Aorta (tissue), 5 donors: ENCODE measurements at regions of chr7 and their contacts with region 1.

Region 1: DNA sequence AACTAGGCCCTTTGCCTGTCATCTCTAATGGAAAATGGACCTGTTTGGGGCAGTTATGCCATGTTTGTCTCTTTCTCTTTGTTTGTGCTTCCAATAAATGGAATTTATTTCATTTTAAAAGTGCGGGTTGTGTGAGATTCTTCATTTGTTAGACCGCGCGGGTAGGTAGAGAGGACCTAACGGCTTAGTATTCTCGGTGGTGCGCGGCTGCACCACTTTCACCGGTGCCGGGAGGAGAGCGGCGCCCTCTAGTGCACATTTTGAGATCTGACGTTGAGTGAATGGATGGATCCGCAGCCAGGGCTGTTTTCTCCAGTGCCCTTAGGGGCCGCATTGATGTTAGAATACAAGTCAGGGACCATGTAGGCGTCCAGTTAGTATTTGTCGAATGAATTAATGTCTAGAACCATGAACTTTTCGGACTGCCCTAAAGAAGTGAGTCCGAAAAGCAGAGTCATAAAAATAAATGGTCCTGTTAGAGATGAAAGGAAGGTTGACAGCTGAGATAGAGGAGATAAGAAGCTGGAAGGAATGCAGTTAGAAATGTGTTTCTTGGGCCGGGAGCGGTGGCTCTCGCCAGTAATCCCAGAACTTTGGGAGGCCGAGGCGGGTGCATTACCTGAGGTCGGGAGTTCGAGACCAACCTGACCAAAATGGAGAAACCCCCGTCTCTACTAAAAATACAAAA is 29.3 kb upstream of the GIMAP8 start:
- DNase-seq: peak; percentile 86 to 93
- ATAC-seq: peak; percentile 92
- H3K4me3 ChIP-seq: no peak overlapping the region
- H3K27ac ChIP-seq: no peak overlapping the region
- H3K4me1 ChIP-seq: no peaks in the 10 kb centered on the region
- H3K27me3 ChIP-seq: no peaks in the 10 kb centered on the region

Region 2: GRCh38 chr7:150307904-150308303 is 113.2 kb before region 1 on chr7:
- intact Hi-C with region 1: loop called in 1 of 2 experiments (anchors 10 kb)
- DNase-seq: no peak
- ATAC-seq: no peak
- H3K4me3 ChIP-seq: no peak overlapping the region
- H3K27ac ChIP-seq: no peak overlapping the region
- H3K4me1 ChIP-seq: no peaks in the 10 kb centered on the region
- H3K27me3 ChIP-seq: no peaks in the 10 kb centered on the region

Region 3: GRCh38 chr7:150356265-150356897 is 64.8 kb before region 1 on chr7:
- intact Hi-C with region 1: loop called (anchors 2 to 5 kb)
- DNase-seq: peak in 1 of 2 donors; percentile 10
- ATAC-seq: no peak
- H3K4me3 ChIP-seq: no peak overlapping the region
- H3K27ac ChIP-seq: no peak overlapping the region
- H3K4me1 ChIP-seq: no peaks in the 10 kb centered on the region
- H3K27me3 ChIP-seq: no peaks in the 10 kb centered on the region